ENCODE measurements at regions of chr15 and their contacts with region 1.

Region 1: DNA sequence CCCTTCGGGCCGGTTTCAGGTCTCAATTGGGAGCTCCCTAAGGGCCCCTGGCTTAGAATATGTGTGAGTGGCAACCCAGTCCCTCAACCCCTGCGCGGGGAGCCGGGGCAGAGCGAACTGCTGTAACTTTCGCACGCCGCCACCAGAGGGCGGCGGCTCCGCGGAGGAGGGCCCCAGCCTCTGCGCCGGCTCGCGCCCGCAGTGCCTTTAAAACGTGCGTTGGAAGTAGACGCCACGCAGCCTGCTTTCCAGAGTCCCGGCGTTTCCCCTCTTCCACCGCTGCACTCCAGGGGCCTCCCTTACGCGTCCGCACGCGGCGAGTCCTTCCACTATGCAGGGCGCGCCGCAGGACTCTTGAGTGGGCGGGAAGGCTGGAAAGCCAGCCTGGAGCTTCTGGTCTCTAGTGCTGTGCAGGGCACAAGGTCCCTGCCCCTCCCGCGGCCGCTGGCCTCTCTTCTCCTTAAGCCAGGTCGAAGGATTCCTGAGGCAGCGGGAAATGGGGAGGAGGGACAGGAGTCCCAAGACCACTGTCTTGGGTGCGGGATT is 23.7 kb upstream of the RNU6-1 start:
- DNase-seq: peak; percentile 78
- H3K4me3 Mint-ChIP-seq: peak overlapping the region; percentile 66
- H3K27ac Mint-ChIP-seq: peak overlapping the region; percentile 37
- H3K4me1 Mint-ChIP-seq: peaks cover 14% of the 10 kb centered on the region
- H3K27me3 Mint-ChIP-seq: no peaks in the 10 kb centered on the region
- CTCF ChIP-seq: peak; percentile 95

Region 2: DNA sequence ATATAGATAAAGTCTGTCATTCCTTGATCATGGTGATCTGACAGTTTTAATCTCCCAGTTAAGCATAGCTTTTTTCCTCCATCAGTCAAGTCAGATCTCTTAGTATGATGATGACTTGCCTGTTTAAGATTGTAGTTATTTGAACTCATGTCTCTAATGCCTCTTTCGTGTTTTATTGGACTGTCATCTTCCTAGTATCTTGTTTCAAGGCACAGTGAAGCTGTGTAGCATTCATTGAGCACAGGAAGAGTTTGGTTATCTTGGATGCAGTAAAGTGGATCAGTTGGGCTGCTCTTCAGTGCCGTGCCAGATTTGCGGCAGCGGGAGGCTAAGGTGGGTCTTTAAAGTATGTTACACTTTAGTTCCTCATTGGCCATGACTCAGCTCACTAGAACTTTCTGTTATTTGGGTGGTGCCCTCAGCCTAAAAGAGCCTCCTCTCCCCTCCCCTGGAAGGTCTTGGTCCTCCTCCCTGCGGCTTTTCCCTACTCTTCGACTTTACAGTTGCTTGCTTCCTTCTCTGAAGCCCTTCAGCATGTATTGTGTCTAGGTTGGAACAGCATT is 83.9 kb before region 1 on chr15:
- CTCF ChIA-PET with region 1: no interaction called
- POLR2A ChIA-PET with region 1: no interaction called
- intact Hi-C with region 1: no loop called
- DNase-seq: no peak
- H3K4me3 Mint-ChIP-seq: no peak overlapping the region
- H3K27ac Mint-ChIP-seq: no peak overlapping the region
- H3K4me1 Mint-ChIP-seq: no peaks in the 10 kb centered on the region
- H3K27me3 Mint-ChIP-seq: no peaks in the 10 kb centered on the region
- CTCF ChIP-seq: no peak

Region 3: DNA sequence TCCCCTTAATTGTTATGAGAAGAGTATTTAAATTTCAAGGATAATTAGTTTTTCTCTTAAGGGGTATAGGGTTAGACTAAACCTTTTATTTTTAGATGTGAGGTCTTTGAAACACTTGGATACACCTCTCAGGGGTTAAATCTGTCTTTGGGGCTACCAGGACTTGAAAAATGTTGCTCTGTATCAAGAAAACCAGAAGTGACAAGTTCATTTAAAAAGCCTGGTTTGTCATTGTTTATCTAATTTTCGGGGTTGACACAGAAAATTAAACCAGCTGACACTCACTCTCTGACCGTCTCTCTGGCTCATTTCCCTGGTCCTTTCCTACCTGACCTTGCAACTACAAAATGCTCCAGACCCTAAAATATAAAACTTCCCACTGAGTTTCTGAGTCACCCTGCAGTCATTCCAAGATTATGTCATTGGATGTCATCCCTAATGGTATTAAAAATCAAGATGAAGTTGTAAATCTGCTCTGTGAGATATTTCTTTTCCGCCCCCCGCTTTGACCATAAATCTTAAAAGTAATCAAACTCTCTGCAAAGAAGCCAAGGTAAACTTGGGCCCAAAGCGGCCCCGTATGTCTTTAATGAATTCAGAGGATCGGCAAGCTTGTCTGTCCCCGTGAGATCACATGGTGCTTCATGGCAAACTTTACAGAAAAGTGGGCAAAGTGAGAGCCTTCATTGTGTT is 71.1 kb before region 1 on chr15:
- CTCF ChIA-PET with region 1: no interaction called
- POLR2A ChIA-PET with region 1: no interaction called
- intact Hi-C with region 1: no loop called
- DNase-seq: no peak
- H3K4me3 Mint-ChIP-seq: no peak overlapping the region
- H3K27ac Mint-ChIP-seq: no peak overlapping the region
- H3K4me1 Mint-ChIP-seq: no peaks in the 10 kb centered on the region
- H3K27me3 Mint-ChIP-seq: no peaks in the 10 kb centered on the region
- CTCF ChIP-seq: no peak

Region 4: DNA sequence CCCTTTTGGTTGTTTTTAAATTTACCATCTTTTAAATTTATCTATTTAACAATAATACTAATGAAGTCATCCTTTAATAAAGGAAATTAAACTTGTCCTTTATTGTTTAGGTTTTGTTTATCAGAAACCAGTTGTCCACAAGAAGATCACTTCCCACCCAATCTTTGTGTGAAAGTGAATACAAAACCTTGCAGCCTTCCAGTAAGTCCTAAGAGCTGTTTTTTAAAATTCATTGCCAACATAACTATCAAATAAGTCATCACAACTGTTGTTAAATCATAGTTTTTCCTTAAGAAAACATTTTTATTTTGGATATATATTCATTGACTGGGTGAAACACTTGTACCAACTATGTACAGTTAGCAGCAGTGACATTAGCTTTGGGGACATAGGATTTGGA is 282.2 kb after region 1 on chr15:
- CTCF ChIA-PET with region 1: interaction called, 90 read pairs
- POLR2A ChIA-PET with region 1: no interaction called
- intact Hi-C with region 1: no loop called
- DNase-seq: no peak
- H3K4me3 Mint-ChIP-seq: no peak overlapping the region
- H3K27ac Mint-ChIP-seq: no peak overlapping the region
- H3K4me1 Mint-ChIP-seq: peaks cover 14% of the 10 kb centered on the region
- H3K27me3 Mint-ChIP-seq: no peaks in the 10 kb centered on the region
- CTCF ChIP-seq: no peak

Region 5: GRCh38 chr15:68154923-68155559 is 291.5 kb after region 1 on chr15:
- CTCF ChIA-PET with region 1: interaction called, 90 read pairs
- POLR2A ChIA-PET with region 1: interaction called, 8 read pairs
- intact Hi-C with region 1: loop called (anchors 1 kb)
- DNase-seq: peak; percentile 71
- H3K4me3 Mint-ChIP-seq: no peak overlapping the region
- H3K27ac Mint-ChIP-seq: no peak overlapping the region
- H3K4me1 Mint-ChIP-seq: peaks cover 20% of the 10 kb centered on the region
- H3K27me3 Mint-ChIP-seq: no peaks in the 10 kb centered on the region
- CTCF ChIP-seq: peak; percentile 79